ENCODE measurements at regions of chr14 and their contacts with region 1.

Region 1: GRCh38 chr14:49767562-49768300 is at the start of gene KLHDC2:
- DNase-seq: peak; percentile 89 to 95 (median 94)
- ATAC-seq: peak; percentile 89
- H3K4me3 ChIP-seq: peak within 1 kb of the TSS; percentile 95
- H3K4me1 ChIP-seq: peaks cover 14% of the 10 kb centered on the region
- CTCF ChIP-seq: no peak
- total RNA-seq, gene KLHDC2: 65.2 to 83.0 (median 75.0) TPM

Region 2: GRCh38 chr14:49633640-49634546 is 133.8 kb before region 1 on chr14:
- intact Hi-C with region 1: loop called (anchors 5 to 10 kb)
- DNase-seq: peak; percentile 88 to 97 (median 94)
- ATAC-seq: peak; percentile 93
- H3K4me3 ChIP-seq: peak overlapping the region; percentile 96
- H3K4me1 ChIP-seq: peaks cover 9% of the 10 kb centered on the region
- CTCF ChIP-seq: peak; percentile 86

Region 3: DNA sequence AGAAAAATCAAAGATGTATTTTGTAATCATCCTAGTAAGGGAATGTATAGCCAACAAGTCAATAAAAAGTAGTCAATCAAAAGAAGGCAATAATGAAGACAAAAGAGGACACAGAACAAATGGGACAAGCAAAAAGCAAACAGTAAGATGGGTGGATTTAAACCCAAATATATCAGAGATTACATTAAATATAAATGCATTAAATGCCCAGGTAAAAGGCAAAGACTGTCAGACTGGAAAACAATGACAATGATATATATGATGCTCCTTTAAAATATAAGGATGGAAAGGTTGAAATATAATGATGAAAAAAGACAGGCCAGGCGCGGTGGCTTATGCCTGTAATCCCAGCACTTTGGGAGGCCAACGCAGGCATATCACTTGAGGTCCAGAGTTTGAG is 49.1 kb after region 1 on chr14:
- intact Hi-C with region 1: no loop called
- DNase-seq: no peak
- ATAC-seq: no peak
- H3K4me3 ChIP-seq: no peak overlapping the region
- H3K4me1 ChIP-seq: no peaks in the 10 kb centered on the region
- CTCF ChIP-seq: no peak

Measured in mucosa of descending colon (tissue), 3 donors.